HCT116 (cell line): ENCODE measurements at regions of chr6 and their contacts with region 1.

Region 1: DNA sequence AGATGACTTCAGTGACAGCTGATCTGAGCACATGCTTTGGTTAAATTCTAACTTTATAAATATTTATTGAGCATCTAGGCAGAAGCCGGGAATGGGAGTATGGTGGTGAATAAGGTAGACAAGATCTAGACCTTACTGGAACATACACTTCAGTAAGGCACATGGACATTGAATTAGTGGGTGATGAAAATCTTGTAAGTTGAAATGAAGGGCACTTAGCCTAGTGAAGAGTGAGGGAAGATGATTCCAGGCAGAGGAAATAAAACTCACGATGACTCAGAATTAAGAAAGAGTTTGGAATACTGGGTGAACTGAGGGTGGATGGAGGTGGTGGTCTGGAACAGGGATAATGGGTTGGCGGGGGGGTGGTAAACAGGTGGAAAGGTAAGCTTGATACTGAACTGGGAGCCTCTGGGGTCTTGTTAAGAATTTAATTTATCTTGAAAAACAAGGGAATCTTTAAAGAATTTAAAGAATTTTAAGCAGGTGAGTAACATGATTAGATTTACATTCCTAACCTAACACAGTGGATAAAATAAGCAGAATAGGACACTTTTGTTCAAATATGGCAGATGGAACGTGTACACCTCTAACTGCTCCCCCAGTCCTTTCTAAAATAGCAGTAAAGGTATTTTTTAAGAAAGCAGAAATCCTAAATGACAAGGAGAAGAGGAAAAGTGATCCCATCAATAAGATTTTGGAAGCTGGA is 75.2 kb upstream of the ARHGAP18 start:
- DNase-seq: no peak
- ATAC-seq: peak; percentile 38
- H3K4me3 ChIP-seq: no peak overlapping the region
- H3K27ac ChIP-seq: no peak overlapping the region
- H3K4me1 ChIP-seq: peaks cover 8 to 23% of the 10 kb centered on the region in 2 experiments; a peak in 3 of 4 replicates
- H3K27me3 ChIP-seq: no peaks in the 10 kb centered on the region
- CTCF ChIP-seq: no peak
- POLR2A ChIP-seq: no peak
- RAD21 ChIP-seq: no peak

Region 2: DNA sequence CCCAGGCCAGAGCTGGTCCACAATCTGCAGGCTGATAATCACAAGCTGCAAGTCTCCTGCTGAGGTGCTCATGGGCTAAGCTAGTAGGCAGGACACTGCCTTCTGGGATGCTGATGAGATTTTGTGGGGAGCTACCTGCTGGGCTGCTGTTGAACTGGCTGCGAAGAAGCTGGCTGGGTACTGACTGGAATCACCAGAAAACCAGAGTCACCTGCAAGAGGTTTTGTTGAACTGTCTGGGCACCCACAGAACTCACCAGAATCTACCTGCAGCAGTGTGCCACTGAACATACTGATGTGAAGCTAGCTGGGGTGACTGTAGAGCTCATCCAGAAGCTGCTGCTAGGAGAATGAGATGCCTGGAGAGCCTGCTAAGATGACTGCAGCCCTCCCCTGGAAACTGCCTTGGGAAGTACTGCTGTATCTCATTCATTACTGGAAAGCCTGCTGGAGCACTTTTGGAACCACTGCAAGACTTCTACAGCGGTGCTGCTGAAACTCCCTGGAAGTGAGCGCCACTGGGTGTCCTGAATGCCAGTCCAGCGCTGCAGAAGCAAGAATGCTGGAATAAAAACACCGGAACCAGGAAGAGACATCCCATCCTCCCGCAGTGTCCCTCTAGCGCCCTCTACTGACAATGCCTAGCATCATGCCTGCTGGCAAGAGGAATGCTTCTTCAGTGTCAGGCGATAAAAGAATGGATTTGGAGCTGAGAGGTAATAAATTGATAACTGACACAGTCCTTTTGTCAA is 10.3 kb before region 1 on chr6:
- CTCF ChIA-PET with region 1: interaction called, 19 read pairs
- POLR2A ChIA-PET with region 1: interaction called, 8 read pairs
- RAD21 ChIA-PET with region 1: no interaction called
- intact Hi-C with region 1: no loop called
- DNase-seq: peak; percentile 68
- ATAC-seq: peak; percentile 93
- H3K4me3 ChIP-seq: peak overlapping the region; percentile 24 to 34
- H3K27ac ChIP-seq: peak overlapping the region; percentile 46
- H3K4me1 ChIP-seq: peaks cover 8 to 13% of the 10 kb centered on the region in 2 experiments; a peak in 3 of 4 replicates
- H3K27me3 ChIP-seq: no peaks in the 10 kb centered on the region
- CTCF ChIP-seq: peak; percentile 77 to 100 (median 98)
- POLR2A ChIP-seq: no peak
- RAD21 ChIP-seq: peak; percentile 85

Region 3: GRCh38 chr6:129844118-129844891 is 59.1 kb after region 1 on chr6:
- CTCF ChIA-PET with region 1: no interaction called
- POLR2A ChIA-PET with region 1: no interaction called
- RAD21 ChIA-PET with region 1: no interaction called
- intact Hi-C with region 1: loop called (anchors 5 kb)
- DNase-seq: peak; percentile 60
- ATAC-seq: peak; percentile 94
- H3K4me3 ChIP-seq: peak overlapping the region in 1 of 2 experiments; percentile 12; a peak in 2 of 4 replicates
- H3K27ac ChIP-seq: peak overlapping the region; percentile 63
- H3K4me1 ChIP-seq: peaks cover 23 to 28% of the 10 kb centered on the region in 2 experiments
- H3K27me3 ChIP-seq: no peaks in the 10 kb centered on the region
- CTCF ChIP-seq: no peak
- POLR2A ChIP-seq: peak; percentile 57
- RAD21 ChIP-seq: no peak

Region 4: GRCh38 chr6:129936329-129937165 is 151.3 kb after region 1 on chr6:
- CTCF ChIA-PET with region 1: no interaction called
- POLR2A ChIA-PET with region 1: no interaction called
- RAD21 ChIA-PET with region 1: no interaction called
- intact Hi-C with region 1: loop called (anchors 10 kb)
- DNase-seq: peak; percentile 81
- ATAC-seq: peak; percentile 99
- H3K4me3 ChIP-seq: no peak overlapping the region
- H3K27ac ChIP-seq: no peak overlapping the region
- H3K4me1 ChIP-seq: 0 out of 4 replicates have a peak, but pooled peaks cover 0 to 3% of the 10 kb centered on the region in 2 experiments
- H3K27me3 ChIP-seq: no peaks in the 10 kb centered on the region
- CTCF ChIP-seq: peak; percentile 30 to 75 (median 62); a peak in 4 of 6 replicates
- POLR2A ChIP-seq: no peak
- RAD21 ChIP-seq: peak; percentile 87